MCF 10A (cell line): ENCODE measurements at regions of chr1 and their contacts with region 1.

Region 1: DNA sequence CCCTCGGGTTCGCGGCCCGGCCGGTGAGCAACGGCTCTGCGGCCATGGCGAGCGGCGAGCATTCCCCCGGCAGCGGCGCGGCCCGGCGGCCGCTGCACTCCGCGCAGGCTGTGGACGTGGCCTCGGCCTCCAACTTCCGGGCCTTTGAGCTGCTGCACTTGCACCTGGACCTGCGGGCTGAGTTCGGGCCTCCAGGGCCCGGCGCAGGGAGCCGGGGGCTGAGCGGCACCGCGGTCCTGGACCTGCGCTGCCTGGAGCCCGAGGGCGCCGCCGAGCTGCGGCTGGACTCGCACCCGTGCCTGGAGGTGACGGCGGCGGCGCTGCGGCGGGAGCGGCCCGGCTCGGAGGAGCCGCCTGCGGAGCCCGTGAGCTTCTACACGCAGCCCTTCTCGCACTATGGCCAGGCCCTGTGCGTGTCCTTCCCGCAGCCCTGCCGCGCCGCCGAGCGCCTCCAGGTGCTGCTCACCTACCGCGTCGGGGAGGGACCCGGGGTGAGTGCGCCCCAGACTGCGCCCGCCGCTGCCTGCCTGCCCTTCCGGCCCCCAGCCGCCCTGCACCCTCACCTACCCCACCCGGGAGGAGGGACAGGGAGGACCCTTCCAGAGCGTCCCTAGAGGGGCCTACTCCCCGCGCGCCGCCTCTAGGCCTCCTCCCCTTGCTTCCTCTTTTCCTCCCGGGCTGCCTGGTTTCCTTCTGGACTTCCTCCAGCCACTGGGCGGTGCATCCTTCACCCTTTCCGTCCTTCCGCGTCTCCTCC is at the start of gene RNPEP:
- DNase-seq: peak; percentile 94
- H3K4me3 Mint-ChIP-seq: peak within 1 kb of the TSS; percentile 90
- H3K27ac Mint-ChIP-seq: peak within 1 kb of the TSS; percentile 66
- H3K4me1 Mint-ChIP-seq: peaks cover 24% of the 10 kb centered on the region
- H3K27me3 Mint-ChIP-seq: no peaks in the 10 kb centered on the region
- CTCF ChIP-seq: peak; percentile 30
- total RNA-seq, gene RNPEP: 147 and 155 TPM in 2 replicates

Region 2: DNA sequence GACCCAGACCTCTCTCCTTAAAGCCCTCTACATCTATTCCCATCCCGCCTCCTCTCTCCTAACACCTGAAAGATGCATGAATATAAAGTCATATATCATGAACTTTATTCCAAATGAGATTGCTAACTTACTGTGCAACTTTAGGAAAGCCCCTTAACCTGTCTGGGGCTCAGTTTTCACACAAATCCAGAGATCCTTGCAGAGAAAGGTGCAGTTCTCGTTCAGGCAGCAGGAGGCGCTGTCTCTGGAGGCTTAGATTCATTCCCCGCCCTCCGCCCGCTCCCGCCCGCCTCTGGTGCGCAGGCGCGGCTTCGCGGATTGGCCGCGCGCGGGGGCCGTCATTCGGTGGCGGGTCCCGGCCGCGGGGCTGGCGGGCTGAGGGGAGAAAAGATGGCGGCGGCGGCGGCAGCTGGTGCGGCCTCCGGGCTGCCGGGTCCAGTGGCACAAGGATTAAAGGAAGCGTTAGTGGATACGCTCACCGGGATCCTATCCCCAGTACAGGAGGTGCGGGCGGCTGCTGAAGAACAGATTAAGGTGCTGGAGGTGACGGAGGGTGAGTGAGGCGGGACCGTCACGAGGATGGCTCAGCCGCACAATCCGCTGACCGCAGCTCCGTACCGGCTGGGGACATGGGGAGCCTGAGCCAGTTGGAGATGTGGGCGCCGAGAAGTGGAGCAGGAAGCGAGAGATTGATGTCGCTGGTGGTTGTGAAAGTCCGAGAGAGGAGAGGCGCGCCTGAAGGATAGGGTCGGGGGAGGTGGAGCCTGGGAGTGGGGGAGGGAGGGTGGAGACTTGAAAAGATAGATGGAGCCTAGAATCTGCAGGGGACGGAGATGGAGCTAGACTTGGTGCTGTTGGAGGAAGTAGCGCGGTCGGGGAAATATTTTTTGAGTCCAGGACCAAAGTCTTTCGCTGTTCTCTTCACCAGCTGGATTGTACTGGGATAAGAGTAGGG is 153.7 kb before region 1 on chr1 and contains the start of gene IPO9:
- CTCF ChIA-PET with region 1: interaction called, 3 read pairs
- POLR2A ChIA-PET with region 1: interaction called, 11 read pairs
- intact Hi-C with region 1: no loop called
- DNase-seq: peak; percentile 98
- H3K4me3 Mint-ChIP-seq: peak within 1 kb of the TSS; percentile 100
- H3K27ac Mint-ChIP-seq: peak within 1 kb of the TSS; percentile 94
- H3K4me1 Mint-ChIP-seq: peaks cover 46% of the 10 kb centered on the region
- H3K27me3 Mint-ChIP-seq: no peaks in the 10 kb centered on the region
- CTCF ChIP-seq: peak; percentile 100
- total RNA-seq, gene IPO9: 112 and 117 TPM in 2 replicates

Region 3: GRCh38 chr1:201964261-201964660 is 18.5 kb before region 1 on chr1:
- CTCF ChIA-PET with region 1: interaction called, 5 read pairs
- POLR2A ChIA-PET with region 1: interaction called, 12 read pairs
- intact Hi-C with region 1: no loop called
- DNase-seq: no peak
- H3K4me3 Mint-ChIP-seq: no peak overlapping the region
- H3K27ac Mint-ChIP-seq: no peak overlapping the region
- H3K4me1 Mint-ChIP-seq: peaks cover 14% of the 10 kb centered on the region
- H3K27me3 Mint-ChIP-seq: no peaks in the 10 kb centered on the region
- CTCF ChIP-seq: no peak

Region 4: GRCh38 chr1:202009326-202010179 is 26.8 kb after region 1 on chr1:
- CTCF ChIA-PET with region 1: interaction called, 41 read pairs
- POLR2A ChIA-PET with region 1: interaction called, 13 read pairs
- intact Hi-C with region 1: no loop called
- DNase-seq: peak; percentile 95
- H3K4me3 Mint-ChIP-seq: no peak overlapping the region
- H3K27ac Mint-ChIP-seq: no peak overlapping the region
- H3K4me1 Mint-ChIP-seq: peaks cover 26% of the 10 kb centered on the region
- H3K27me3 Mint-ChIP-seq: no peaks in the 10 kb centered on the region
- CTCF ChIP-seq: peak; percentile 97

Region 5: DNA sequence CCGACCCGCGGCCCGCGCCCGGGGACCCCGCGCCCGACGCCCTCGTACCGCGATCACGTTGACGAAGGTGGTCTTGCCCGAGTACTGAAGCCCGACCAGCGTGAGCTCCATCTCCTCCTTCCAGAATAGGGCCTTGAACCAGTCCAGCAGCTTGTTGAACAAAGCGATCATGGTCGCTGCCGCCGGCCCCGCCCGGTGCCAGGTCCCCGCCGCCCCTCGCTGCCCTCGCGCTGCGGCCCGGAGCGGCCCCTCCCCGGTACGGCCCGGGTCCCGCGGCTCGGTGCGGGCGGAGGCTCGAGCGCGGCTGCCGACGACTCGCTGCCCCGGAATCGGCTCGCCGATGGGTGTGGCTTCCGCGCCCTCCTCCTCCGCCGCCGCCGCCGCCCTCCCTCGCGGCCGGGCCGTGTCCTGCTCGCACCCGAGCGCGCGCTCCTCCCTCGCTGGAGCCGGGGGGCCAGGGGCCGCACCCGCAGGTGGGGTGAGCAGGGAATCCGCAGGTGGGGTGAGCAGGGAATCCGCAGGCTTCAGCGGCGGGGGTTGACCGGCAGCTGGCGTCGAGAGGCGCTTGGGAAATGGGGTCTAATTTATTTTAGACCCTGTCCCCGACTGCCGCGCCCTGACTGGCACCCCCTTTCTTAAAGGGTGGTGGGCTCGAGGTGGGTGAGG is 161.7 kb after region 1 on chr1 and contains the start of gene ARL8A:
- CTCF ChIA-PET with region 1: interaction called, 5 read pairs
- POLR2A ChIA-PET with region 1: interaction called, 14 read pairs
- intact Hi-C with region 1: no loop called
- DNase-seq: peak; percentile 72
- H3K4me3 Mint-ChIP-seq: peak within 1 kb of the TSS; percentile 86
- H3K27ac Mint-ChIP-seq: peak within 1 kb of the TSS; percentile 86
- H3K4me1 Mint-ChIP-seq: peaks cover 12% of the 10 kb centered on the region
- H3K27me3 Mint-ChIP-seq: no peaks in the 10 kb centered on the region
- CTCF ChIP-seq: no peak
- total RNA-seq, gene ARL8A: 94.8 and 126 TPM in 2 replicates